ENCODE measurements at regions of chrX and their contacts with region 1.

Region 1: GRCh38 chrX:130902783-130903613 is at the start of gene ENOX2:
- DNase-seq: peak; percentile 89
- ATAC-seq: peak; percentile 94
- H3K4me3 ChIP-seq: peak within 1 kb of the TSS; percentile 21 to 87 (median 80)
- H3K4me3 Mint-ChIP-seq: no peak within 1 kb of the TSS
- H3K27ac ChIP-seq: peak within 1 kb of the TSS; percentile 69 to 80
- H3K27ac Mint-ChIP-seq: peak within 1 kb of the TSS; percentile 67
- H3K4me1 ChIP-seq: peaks cover 0 to 8% of the 10 kb centered on the region in 2 donors
- H3K4me1 Mint-ChIP-seq: peaks cover 11% of the 10 kb centered on the region
- H3K27me3 ChIP-seq: no peaks in the 10 kb centered on the region
- H3K27me3 Mint-ChIP-seq: peaks cover 4% of the 10 kb centered on the region
- CTCF ChIP-seq: no peak
- total RNA-seq, gene ENOX2: 18.8 and 21.8 TPM in 2 replicates

Region 2: GRCh38 chrX:130165703-130166502 is 737.1 kb before region 1 on chrX and contains the start of gene AIFM1:
- CTCF ChIA-PET with region 1: no interaction called
- POLR2A ChIA-PET with region 1: no interaction called
- intact Hi-C with region 1: loop called (anchors 5 kb)
- DNase-seq: peak; percentile 92
- ATAC-seq: peak; percentile 88
- H3K4me3 ChIP-seq: peak within 1 kb of the TSS; percentile 61 to 76 (median 66)
- H3K4me3 Mint-ChIP-seq: peak within 1 kb of the TSS; percentile 95
- H3K27ac ChIP-seq: peak within 1 kb of the TSS; percentile 54 to 77
- H3K27ac Mint-ChIP-seq: peak within 1 kb of the TSS; percentile 96
- H3K4me1 ChIP-seq: peaks cover 13 to 21% of the 10 kb centered on the region in 2 donors
- H3K4me1 Mint-ChIP-seq: peaks cover 31% of the 10 kb centered on the region
- H3K27me3 ChIP-seq: no peaks in the 10 kb centered on the region
- H3K27me3 Mint-ChIP-seq: no peaks in the 10 kb centered on the region
- CTCF ChIP-seq: no peak
- total RNA-seq, gene AIFM1: 14.8 and 15.9 TPM in 2 replicates

Region 3: GRCh38 chrX:130401415-130402207 is 501.4 kb before region 1 on chrX and contains the start of gene RBMX2:
- CTCF ChIA-PET with region 1: no interaction called
- POLR2A ChIA-PET with region 1: no interaction called
- intact Hi-C with region 1: loop called (anchors 2 kb)
- DNase-seq: peak; percentile 78
- ATAC-seq: peak; percentile 82
- H3K4me3 ChIP-seq: peak within 1 kb of the TSS; percentile 73 to 81 (median 73)
- H3K4me3 Mint-ChIP-seq: peak within 1 kb of the TSS; percentile 95
- H3K27ac ChIP-seq: peak within 1 kb of the TSS; percentile 67 to 87
- H3K27ac Mint-ChIP-seq: peak within 1 kb of the TSS; percentile 90
- H3K4me1 ChIP-seq: peaks cover 9 to 11% of the 10 kb centered on the region in 2 donors
- H3K4me1 Mint-ChIP-seq: peaks cover 26% of the 10 kb centered on the region
- H3K27me3 ChIP-seq: peaks cover 0 to 9% (median 0%) of the 10 kb centered on the region in 4 experiments
- H3K27me3 Mint-ChIP-seq: peaks cover 21% of the 10 kb centered on the region
- CTCF ChIP-seq: no peak
- total RNA-seq, gene RBMX2: 25.2 TPM in 2 replicates

Region 4: GRCh38 chrX:132270699-132271098 is 1367.7 kb after region 1 on chrX:
- CTCF ChIA-PET with region 1: no interaction called
- POLR2A ChIA-PET with region 1: no interaction called
- intact Hi-C with region 1: no loop called
- DNase-seq: no peak
- ATAC-seq: no peak
- H3K4me3 ChIP-seq: no peak overlapping the region
- H3K4me3 Mint-ChIP-seq: no peak overlapping the region
- H3K27ac ChIP-seq: no peak overlapping the region
- H3K27ac Mint-ChIP-seq: no peak overlapping the region
- H3K4me1 ChIP-seq: no peaks in the 10 kb centered on the region
- H3K4me1 Mint-ChIP-seq: no peaks in the 10 kb centered on the region
- H3K27me3 ChIP-seq: no peaks in the 10 kb centered on the region
- H3K27me3 Mint-ChIP-seq: no peaks in the 10 kb centered on the region
- CTCF ChIP-seq: no peak

Measured in B cell (primary cell).